Activated naive CD4-positive, alpha-beta T cell treated with anti-CD3 and anti-CD28 coated beads for 36 hours (primary cell): ENCODE measurements at regions of chr1 and their contacts with region 1.

Region 1: GRCh38 chr1:28172713-28173150 is 3.8 kb downstream of the PTAFR start:
- DNase-seq: peak; percentile 38
- H3K4me3 Mint-ChIP-seq: no peak overlapping the region
- H3K27ac Mint-ChIP-seq: no peak overlapping the region
- H3K4me1 Mint-ChIP-seq: peaks cover 41% of the 10 kb centered on the region
- H3K27me3 Mint-ChIP-seq: peaks cover 28% of the 10 kb centered on the region

Region 2: DNA sequence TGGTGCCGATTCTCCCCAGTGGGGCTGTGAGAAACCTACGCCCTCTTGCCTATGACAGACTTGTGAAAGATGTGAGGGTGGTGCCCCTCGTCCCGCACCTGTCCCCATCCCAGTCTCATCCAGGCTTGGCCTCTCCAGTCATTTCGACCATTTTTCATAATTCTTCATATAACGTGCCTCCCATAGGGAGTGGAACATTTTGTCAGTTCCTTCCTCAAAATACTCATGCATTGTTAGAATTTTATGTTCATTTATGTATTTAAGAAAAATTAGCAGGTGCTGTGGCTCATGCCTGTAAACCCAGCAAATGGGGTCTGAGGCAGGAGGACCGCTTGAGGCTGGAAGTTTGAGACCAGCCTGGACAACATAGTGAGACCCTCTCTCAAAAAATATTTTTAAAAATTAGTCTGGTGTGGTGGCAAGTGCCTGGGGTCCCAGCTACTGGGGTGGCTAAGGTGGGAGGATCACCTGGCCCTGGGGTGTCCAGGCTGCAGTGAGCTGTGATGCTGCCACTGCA is 257.6 kb before region 1 on chr1:
- CTCF ChIA-PET with region 1: no interaction called
- intact Hi-C with region 1: no loop called
- DNase-seq: no peak
- H3K4me3 Mint-ChIP-seq: peak overlapping the region; percentile 100
- H3K27ac Mint-ChIP-seq: peak overlapping the region; percentile 100
- H3K4me1 Mint-ChIP-seq: peaks cover 30% of the 10 kb centered on the region
- H3K27me3 Mint-ChIP-seq: no peaks in the 10 kb centered on the region

Region 3: GRCh38 chr1:28078680-28079626 is 93.8 kb before region 1 on chr1:
- CTCF ChIA-PET with region 1: no interaction called
- intact Hi-C with region 1: no loop called
- DNase-seq: no peak
- H3K4me3 Mint-ChIP-seq: no peak overlapping the region
- H3K27ac Mint-ChIP-seq: no peak overlapping the region
- H3K4me1 Mint-ChIP-seq: peaks cover 14% of the 10 kb centered on the region
- H3K27me3 Mint-ChIP-seq: no peaks in the 10 kb centered on the region

Region 4: DNA sequence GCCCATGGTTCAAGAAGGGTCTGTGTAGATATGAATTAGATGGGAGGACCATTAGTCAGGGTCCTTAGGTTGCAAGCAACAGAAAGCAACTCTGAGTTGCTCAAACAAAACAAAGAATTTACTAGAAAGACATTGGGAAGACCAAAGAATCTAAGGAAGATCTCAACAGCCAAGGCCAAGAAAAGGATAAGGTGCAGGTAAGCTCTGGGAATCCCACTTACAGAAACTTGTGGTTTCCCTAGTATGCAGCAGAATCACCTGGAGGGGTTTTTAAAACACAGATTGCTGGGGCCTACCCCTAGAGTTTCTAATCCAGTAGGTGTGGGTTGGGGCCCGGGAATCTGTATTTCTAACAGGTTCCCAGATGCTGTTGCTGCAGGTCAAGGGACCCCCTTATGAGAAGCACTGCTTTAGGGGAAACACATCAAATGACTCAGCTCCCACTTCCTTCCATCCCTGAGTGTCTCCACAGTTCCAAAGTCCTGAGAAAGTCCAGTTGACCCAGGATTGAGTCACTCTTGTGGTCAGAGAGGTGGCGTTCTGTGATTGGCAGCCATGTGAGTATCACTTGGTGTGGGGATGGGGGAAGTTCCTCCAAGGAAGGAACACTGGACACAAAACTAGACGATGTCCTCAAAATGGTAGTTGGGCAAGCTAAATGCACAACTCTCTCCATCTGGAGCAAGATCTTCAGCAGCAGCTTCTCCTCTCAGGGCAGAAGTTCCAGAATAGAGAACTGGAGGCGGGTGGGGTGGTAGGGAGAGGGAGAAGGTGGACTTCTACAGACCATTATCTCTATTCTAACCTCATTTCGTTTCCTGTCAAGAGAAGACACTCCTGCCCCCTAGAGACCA is 60.1 kb before region 1 on chr1:
- CTCF ChIA-PET with region 1: interaction called, 3 read pairs
- intact Hi-C with region 1: loop called (anchors 1 kb)
- DNase-seq: peak; percentile 25
- H3K4me3 Mint-ChIP-seq: no peak overlapping the region
- H3K27ac Mint-ChIP-seq: no peak overlapping the region
- H3K4me1 Mint-ChIP-seq: peaks cover 13% of the 10 kb centered on the region
- H3K27me3 Mint-ChIP-seq: no peaks in the 10 kb centered on the region